Psoas muscle (tissue), 8 donors: ENCODE measurements at regions of chr4 and their contacts with region 1.

Region 1: DNA sequence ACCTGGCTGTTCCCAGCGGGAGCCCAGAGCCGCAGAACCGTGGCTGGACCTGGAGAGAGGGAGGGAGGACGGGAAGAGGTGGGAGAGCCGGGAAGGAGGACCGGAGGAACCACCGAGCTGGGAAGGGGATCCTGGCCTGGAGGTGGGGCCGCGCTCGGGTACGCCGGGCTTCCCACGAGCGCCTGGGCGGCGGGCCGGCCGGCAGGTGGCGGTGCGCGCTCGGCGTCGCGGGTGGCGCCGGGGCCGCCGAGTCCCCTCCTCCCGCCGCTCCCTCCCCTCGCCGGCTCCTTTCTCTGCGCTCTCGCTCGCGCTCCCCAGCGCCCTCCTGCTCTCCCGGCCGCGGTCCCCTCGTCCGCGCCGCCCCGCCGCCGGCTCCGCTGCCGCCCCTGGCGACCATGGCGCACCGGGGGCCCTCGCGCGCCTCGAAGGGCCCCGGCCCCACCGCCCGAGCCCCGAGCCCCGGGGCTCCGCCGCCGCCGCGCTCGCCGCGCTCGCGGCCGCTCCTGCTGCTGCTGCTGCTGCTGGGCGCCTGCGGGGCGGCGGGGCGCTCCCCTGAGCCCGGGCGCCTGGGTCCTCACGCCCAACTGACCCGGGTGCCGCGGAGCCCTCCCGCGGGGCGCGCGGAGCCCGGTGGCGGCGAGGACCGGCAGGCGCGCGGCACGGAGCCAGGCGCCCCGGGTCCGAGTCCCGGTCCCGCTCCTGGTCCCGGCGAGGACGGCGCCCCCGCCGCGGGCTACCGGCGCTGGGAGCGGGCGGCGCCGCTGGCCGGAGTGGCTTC is at the start of gene SORCS2:
- DNase-seq: peak; percentile 67 to 82
- ATAC-seq: peak; percentile 83 to 94 (median 91)
- H3K4me3 ChIP-seq: peak within 1 kb of the TSS; percentile 60
- H3K27ac ChIP-seq: no peak within 1 kb of the TSS
- H3K4me1 ChIP-seq: peaks cover 7% of the 10 kb centered on the region
- H3K27me3 ChIP-seq: peaks cover 0 to 39% (median 9%) of the 10 kb centered on the region in 3 donors
- CTCF ChIP-seq: peak; percentile 88
- total RNA-seq, gene SORCS2: 0.36 to 1.5 (median 0.89) TPM

Region 2: DNA sequence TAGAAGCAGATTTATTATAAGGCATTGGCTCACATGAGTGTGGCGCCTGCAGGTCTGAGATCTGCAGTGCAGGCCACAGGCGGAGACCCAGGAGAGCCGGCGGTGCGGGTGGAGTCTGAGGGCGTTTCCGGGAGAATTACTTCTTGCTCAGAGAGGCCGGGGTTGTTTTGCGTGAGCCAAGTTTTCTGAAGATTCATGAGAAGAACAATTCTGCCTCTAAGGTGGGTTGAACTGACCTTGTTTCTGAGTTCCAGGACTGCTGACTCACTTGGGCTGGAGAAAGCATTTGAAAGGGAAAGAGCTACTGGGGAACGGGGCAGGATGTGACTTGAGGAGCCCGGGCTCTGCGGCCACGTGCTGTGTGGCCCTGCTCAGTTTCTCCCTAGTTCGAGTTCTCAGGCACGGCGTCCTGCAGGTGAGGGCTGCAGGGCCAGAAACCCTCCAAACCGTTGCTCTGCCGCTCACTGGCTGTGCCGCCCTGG is 36.8 kb before region 1 on chr4:
- intact Hi-C with region 1: no loop called
- DNase-seq: peak in 1 of 2 donors; percentile 60
- ATAC-seq: no peak
- H3K4me3 ChIP-seq: no peak overlapping the region
- H3K27ac ChIP-seq: peak overlapping the region; percentile 42
- H3K4me1 ChIP-seq: no peaks in the 10 kb centered on the region
- H3K27me3 ChIP-seq: peaks cover 0 to 10% (median 3%) of the 10 kb centered on the region in 3 donors
- CTCF ChIP-seq: no peak

Region 3: GRCh38 chr4:7295911-7296660 is 103.6 kb after region 1 on chr4:
- intact Hi-C with region 1: loop called (anchors 1 to 2 kb)
- DNase-seq: peak; percentile 45 to 68
- ATAC-seq: peak; percentile 55 to 87 (median 70)
- H3K4me3 ChIP-seq: no peak overlapping the region
- H3K27ac ChIP-seq: no peak overlapping the region
- H3K4me1 ChIP-seq: peaks cover 6% of the 10 kb centered on the region
- H3K27me3 ChIP-seq: peaks cover 0 to 11% (median 2%) of the 10 kb centered on the region in 3 donors
- CTCF ChIP-seq: peak; percentile 67

Region 4: DNA sequence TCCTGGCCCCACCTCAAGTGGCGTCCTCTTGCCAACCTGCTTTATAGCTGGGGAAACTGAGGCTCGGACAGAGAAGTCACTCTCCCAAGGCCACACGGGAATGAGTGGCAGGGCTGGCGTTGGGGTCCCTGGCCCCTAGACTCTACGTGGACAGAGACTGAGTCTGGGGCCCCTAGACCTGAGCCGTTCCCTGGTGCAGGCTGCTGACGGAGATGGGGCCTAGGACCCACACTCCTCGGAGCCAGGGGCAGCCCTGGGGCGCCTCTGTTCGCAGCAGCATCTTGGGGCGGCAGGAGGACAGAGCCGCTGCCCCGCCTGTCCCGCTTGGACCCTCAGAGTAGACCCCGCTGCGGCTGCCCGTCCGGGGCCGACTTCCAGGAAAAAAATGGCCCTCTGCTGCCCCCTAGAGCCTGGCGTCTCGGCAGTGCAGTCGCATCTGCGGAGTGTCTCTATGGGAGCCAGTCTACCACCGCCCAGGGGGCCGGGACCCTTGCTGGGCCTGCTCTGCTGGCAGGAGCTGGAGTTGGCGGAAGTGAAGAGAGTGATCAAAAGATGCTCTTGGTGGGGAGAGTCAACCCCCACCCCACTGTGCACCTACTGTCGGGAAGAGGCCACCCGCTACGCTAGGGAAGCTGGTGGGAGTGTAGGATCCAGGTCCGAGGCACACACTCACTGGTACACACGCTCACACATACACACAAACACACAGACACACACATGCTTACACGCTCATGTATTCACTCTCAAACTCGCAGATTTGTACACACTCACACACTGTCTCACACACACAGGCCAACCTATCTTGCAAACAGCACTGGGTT is 527.1 kb after region 1 on chr4:
- intact Hi-C with region 1: loop called in 1 of 2 experiments (anchors 2 kb)
- DNase-seq: peak; percentile 48 to 76
- ATAC-seq: peak; percentile 58 to 77 (median 69)
- H3K4me3 ChIP-seq: no peak overlapping the region
- H3K27ac ChIP-seq: no peak overlapping the region
- H3K4me1 ChIP-seq: no peaks in the 10 kb centered on the region
- H3K27me3 ChIP-seq: peaks cover 0 to 5% (median 2%) of the 10 kb centered on the region in 3 donors
- CTCF ChIP-seq: peak; percentile 74